ENCODE measurements at regions of chr19 and their contacts with region 1.

Region 1: GRCh38 chr19:10769533-10770491 is 51.9 kb downstream of the DNM2 start:
- DNase-seq: peak; percentile 70 to 82
- ATAC-seq: peak; percentile 89 to 91 (median 91)
- H3K4me3 ChIP-seq: peak overlapping the region; percentile 4
- H3K27ac ChIP-seq: peak overlapping the region; percentile 74
- H3K4me1 ChIP-seq: peaks cover 48% of the 10 kb centered on the region
- H3K27me3 ChIP-seq: no peaks in the 10 kb centered on the region
- CTCF ChIP-seq: peak; percentile 39

Region 2: GRCh38 chr19:10690341-10690781 is 79.5 kb before region 1 on chr19:
- intact Hi-C with region 1: no loop called
- DNase-seq: no peak
- ATAC-seq: peak in 1 of 4 donors; percentile 17
- H3K4me3 ChIP-seq: no peak overlapping the region
- H3K27ac ChIP-seq: no peak overlapping the region
- H3K4me1 ChIP-seq: peaks cover 5% of the 10 kb centered on the region
- H3K27me3 ChIP-seq: no peaks in the 10 kb centered on the region
- CTCF ChIP-seq: no peak

Region 3: DNA sequence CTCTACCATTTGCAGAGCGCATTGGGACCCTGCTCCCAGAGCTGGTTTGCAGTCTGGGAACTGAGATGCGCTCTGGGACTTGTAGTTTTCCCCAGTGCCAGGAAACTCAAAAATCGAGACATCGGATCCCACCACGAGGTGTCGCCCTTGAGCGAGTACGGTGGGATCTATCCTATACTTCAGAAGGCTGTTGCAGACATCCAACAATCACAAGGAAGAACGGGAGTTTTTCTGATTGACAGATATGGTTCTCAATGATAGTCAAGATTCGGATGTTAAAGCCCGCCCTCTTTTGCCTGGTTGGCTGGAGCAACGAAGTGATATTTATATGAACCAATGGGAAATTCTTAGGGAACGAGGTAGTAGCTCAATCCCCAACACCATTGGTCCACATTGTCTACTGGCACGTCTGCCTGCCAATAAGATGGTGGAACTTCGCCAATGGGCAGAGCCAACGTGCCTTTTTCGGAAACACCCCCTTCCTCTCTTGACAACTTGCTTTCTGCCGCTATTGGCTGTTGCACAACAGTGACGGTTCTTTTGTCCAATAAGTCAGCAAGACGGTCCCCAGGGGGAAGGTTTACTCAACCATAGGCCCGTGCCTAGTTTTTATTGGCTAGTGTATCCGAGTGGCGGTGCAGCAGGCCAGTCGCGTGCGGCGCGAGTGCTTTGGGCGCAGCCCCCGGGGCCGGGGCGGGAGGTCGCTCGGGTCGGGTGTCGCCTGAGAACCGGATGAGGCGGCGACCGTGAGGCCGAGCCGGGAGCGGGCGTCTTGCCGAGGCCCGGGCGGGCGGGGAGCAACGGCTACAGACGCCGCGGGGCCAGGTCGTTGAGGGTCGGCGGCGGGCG is 52.2 kb before region 1 on chr19 and contains the start of gene DNM2:
- intact Hi-C with region 1: loop called (anchors 5 kb)
- DNase-seq: peak; percentile 98 to 99
- ATAC-seq: peak; percentile 90 to 94 (median 92)
- H3K4me3 ChIP-seq: peak within 1 kb of the TSS; percentile 95
- H3K27ac ChIP-seq: peak within 1 kb of the TSS; percentile 96
- H3K4me1 ChIP-seq: peaks cover 27% of the 10 kb centered on the region
- H3K27me3 ChIP-seq: no peaks in the 10 kb centered on the region
- CTCF ChIP-seq: peak; percentile 78
- total RNA-seq, gene DNM2: 117 to 143 (median 130) TPM

Measured in psoas muscle (tissue), 8 donors.